SK-N-SH (cell line): ENCODE measurements at regions of chr7 and their contacts with region 1.

Region 1: DNA sequence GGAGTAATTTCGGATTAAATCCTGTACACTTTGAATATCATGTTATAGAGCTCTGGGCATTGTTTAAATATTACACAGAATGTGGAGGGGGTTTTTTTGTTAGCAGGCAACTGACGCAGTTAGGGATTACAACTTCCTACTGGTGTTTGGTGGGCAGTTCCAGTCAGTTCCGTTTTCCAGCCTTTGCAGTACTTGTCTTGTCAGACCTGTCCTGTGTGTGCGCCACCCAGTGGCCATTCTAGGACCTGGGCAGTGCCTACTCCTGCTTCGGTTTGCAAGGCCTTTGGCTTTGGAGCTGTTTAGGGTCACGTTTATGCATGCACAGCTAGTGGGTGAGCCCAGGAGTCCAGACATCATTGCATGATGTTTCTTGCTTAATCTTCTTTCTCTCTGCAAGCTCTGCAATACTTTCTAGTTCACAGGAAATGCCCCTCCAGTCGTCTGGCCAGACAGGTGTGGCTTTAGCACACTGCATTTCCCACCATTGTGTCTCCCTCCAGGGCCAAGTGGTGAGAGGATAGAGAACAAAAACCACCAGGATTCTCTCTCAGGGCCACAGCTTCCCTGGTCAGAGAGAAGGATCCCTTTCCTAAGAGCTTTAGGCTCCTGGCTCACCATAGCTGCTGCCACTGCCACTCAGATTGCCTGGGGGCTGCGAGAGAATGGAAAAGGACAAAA is 96.5 kb upstream of the TARP start:
- DNase-seq: peak; percentile 74
- H3K4me3 ChIP-seq: no peak overlapping the region; a peak in 1 of 4 replicates
- H3K27ac ChIP-seq: peak overlapping the region in 1 of 2 experiments; percentile 23; a peak in 1 of 4 replicates
- H3K4me1 ChIP-seq: peaks cover 0 to 16% of the 10 kb centered on the region in 2 experiments; a peak in 2 of 4 replicates
- H3K27me3 ChIP-seq: no peaks in the 10 kb centered on the region; the same call in 1 of the 2 replicates
- CTCF ChIP-seq: peak; percentile 98
- EP300 ChIP-seq: no peak
- RAD21 ChIP-seq: peak; percentile 55

Region 2: GRCh38 chr7:37916673-37917660 is 453.0 kb before region 1 on chr7 and contains the start of gene SFRP4:
- CTCF ChIA-PET with region 1: interaction called, 24 read pairs
- POLR2A ChIA-PET with region 1: no interaction called
- DNase-seq: peak; percentile 77
- H3K4me3 ChIP-seq: peak within 1 kb of the TSS; percentile 51 to 54
- H3K27ac ChIP-seq: no peak within 1 kb of the TSS
- H3K4me1 ChIP-seq: peaks cover 0 to 26% of the 10 kb centered on the region in 2 experiments; a peak in 2 of 4 replicates
- H3K27me3 ChIP-seq: peaks cover 39% of the 10 kb centered on the region; the same call in 1 of the 2 replicates
- CTCF ChIP-seq: peak; percentile 82
- EP300 ChIP-seq: no peak
- RAD21 ChIP-seq: peak; percentile 69
- polyA plus RNA-seq, gene SFRP4: 0.03 TPM in 1 of 2 replicates, not detected in the other

Region 3: DNA sequence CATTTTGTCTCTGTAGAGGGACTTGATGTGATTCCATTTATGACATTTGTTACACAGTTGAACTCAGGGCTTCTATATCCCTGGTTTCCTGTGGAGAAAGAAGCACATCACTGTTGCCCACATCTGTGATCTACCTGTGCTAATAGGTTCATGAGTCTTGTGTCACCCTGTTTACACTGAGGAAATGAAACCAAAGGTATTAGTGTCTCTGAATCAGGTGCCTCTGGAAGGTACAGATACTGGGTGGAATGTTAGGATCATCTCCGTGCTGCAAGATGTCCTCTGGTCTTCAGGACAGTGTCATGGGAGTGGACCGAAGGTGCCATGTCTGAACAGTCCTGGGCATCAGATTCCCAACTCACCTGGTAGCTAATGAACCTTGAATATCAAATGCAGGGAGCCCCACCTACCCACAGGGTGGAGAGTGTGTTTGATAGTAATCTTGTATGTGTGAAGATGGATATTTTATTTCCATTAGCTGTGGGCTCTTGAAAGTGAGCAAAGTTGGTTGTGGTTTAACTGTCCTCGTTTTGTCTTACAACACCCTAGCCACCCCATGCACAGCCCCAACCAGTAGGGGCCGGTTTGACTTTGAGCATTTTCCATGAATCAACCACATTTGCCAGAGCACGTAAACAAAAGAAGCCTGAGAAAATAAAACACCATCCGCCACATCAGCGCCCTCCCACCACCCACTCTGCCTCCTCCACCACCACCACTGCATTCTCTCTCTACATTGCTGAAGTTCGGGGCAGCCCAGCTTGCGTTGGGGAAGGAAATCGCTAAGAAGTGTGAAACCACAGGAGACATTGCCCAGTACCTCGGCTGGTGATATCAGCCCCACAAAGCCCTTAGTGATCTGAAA is 137.2 kb before region 1 on chr7:
- CTCF ChIA-PET with region 1: interaction called, 18 read pairs
- POLR2A ChIA-PET with region 1: no interaction called
- DNase-seq: no peak
- H3K4me3 ChIP-seq: no peak overlapping the region
- H3K27ac ChIP-seq: no peak overlapping the region
- H3K4me1 ChIP-seq: peaks cover 0 to 4% of the 10 kb centered on the region in 2 experiments; a peak in 1 of 4 replicates
- H3K27me3 ChIP-seq: no peaks in the 10 kb centered on the region
- CTCF ChIP-seq: no peak
- EP300 ChIP-seq: no peak
- RAD21 ChIP-seq: no peak

Region 4: GRCh38 chr7:38327637-38328036 is 42.3 kb before region 1 on chr7:
- CTCF ChIA-PET with region 1: interaction called, 11 read pairs
- POLR2A ChIA-PET with region 1: no interaction called
- DNase-seq: no peak
- H3K4me3 ChIP-seq: no peak overlapping the region
- H3K27ac ChIP-seq: no peak overlapping the region
- H3K4me1 ChIP-seq: no peaks in the 10 kb centered on the region
- H3K27me3 ChIP-seq: peaks cover 11% of the 10 kb centered on the region; the same call in 1 of the 2 replicates
- CTCF ChIP-seq: no peak
- EP300 ChIP-seq: no peak
- RAD21 ChIP-seq: no peak

Region 5: GRCh38 chr7:38382684-38383083 is 12.7 kb after region 1 on chr7:
- CTCF ChIA-PET with region 1: interaction called, 94 read pairs
- POLR2A ChIA-PET with region 1: no interaction called
- DNase-seq: no peak
- H3K4me3 ChIP-seq: no peak overlapping the region
- H3K27ac ChIP-seq: no peak overlapping the region
- H3K4me1 ChIP-seq: no peaks in the 10 kb centered on the region
- H3K27me3 ChIP-seq: no peaks in the 10 kb centered on the region
- CTCF ChIP-seq: no peak
- EP300 ChIP-seq: no peak
- RAD21 ChIP-seq: no peak

Region 6: GRCh38 chr7:38699471-38699870 is 329.5 kb after region 1 on chr7:
- CTCF ChIA-PET with region 1: no interaction called
- POLR2A ChIA-PET with region 1: no interaction called
- DNase-seq: no peak
- H3K4me3 ChIP-seq: no peak overlapping the region
- H3K27ac ChIP-seq: no peak overlapping the region
- H3K4me1 ChIP-seq: no peaks in the 10 kb centered on the region
- H3K27me3 ChIP-seq: peaks cover 6% of the 10 kb centered on the region; the same call in 1 of the 2 replicates
- CTCF ChIP-seq: no peak
- EP300 ChIP-seq: no peak
- RAD21 ChIP-seq: no peak